ENCODE measurements at regions of chr1 and their contacts with region 1.

Region 1: DNA sequence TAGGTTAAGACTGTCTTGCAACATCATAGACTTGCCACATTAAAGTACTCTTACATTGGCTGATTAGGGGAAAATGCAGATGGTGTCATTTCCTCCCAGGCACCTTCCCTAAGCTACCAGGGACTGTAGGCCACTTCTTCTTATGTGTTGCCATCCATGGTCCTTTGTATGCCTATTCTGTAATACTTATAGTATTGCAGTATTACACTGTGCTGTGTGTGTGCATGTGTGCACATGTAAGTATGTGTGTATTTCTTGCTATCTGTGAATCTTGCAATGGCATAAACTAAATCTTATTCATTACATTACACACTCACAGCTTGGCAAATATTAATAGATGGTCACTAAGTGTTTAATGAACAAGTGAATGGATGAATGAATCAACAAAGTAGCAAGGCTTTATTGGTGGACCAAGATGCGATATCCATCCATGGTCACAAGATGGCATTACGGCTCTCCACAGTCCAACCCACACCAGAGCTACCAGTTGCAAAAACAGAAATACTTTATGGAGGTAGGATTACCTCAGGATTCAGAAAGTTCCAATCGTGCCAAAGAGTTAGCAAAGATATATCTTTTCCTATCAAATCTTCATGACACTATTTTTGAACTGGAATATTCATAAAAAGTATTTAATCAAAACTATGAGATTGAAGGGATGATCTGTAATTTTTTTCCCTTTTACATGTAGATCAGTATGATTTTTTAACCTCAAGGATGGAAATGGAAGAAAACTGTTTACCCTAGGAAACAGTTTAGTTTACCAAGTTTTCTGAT is 160.2 kb downstream of the DENND1B start:
- DNase-seq: peak; percentile 48
- H3K4me3 Mint-ChIP-seq: no peak overlapping the region
- H3K27ac Mint-ChIP-seq: no peak overlapping the region
- H3K4me1 Mint-ChIP-seq: no peaks in the 10 kb centered on the region
- H3K27me3 Mint-ChIP-seq: no peaks in the 10 kb centered on the region
- CTCF ChIP-seq: peak; percentile 46

Region 2: DNA sequence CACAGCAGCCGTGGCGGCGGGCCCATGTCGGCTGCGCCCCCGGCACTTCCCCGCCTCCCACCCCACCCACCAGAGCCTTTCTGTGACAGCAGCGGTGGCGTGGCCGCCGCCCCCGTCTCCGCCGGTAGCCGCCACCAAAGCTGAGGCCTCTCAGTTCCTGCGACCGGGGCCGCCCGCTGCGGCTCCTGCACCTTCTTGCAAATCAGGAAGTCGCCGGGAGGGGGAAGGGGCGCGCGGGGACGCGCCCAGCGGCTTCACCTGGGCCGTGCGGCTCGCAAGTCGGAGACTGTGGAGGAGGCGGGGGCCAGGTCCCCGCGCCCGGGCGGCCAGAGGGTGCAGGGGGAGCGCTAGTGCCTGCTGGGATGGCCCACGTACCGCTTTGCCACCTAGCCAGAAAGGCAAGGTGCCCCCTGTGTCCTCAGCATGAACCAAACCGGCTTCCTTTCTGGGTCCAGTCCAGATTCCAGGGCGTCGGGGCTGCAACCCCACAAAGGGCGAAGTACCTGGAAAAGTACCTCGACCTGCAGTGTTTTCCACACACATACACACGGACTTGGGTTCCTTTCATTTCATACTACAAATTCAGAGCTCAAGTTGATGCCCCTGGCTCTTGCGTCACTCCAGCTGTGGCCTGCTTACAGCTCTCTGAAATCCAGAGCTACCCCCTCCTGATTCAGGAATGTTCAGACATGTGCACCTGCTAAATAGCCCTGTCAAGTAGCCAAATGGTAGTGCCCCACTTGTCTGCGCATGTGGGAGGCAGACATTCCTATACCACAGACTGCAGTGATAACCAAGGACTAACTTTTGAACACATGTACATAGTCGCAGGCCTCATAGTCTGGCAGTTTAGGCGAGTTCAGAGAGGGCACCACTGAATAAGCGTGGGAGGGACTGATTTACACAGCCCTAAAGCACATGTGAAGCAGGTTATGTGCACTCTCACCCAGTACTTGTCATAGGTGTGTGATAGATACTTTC is 160.5 kb after region 1 on chr1 and contains the start of gene DENND1B:
- CTCF ChIA-PET with region 1: no interaction called
- intact Hi-C with region 1: loop called (anchors 5 kb)
- DNase-seq: peak; percentile 93
- H3K4me3 Mint-ChIP-seq: peak within 1 kb of the TSS; percentile 72
- H3K27ac Mint-ChIP-seq: peak within 1 kb of the TSS; percentile 93
- H3K4me1 Mint-ChIP-seq: peaks cover 44% of the 10 kb centered on the region
- H3K27me3 Mint-ChIP-seq: no peaks in the 10 kb centered on the region
- CTCF ChIP-seq: no peak
- total RNA-seq, gene DENND1B: 26.7 and 28.2 TPM in 2 replicates

Region 3: GRCh38 chr1:197868751-197869489 is 253.8 kb after region 1 on chr1:
- CTCF ChIA-PET with region 1: interaction called, 22 read pairs
- intact Hi-C with region 1: loop called (anchors 1 kb)
- DNase-seq: peak; percentile 62
- H3K4me3 Mint-ChIP-seq: no peak overlapping the region
- H3K27ac Mint-ChIP-seq: no peak overlapping the region
- H3K4me1 Mint-ChIP-seq: peaks cover 1% of the 10 kb centered on the region
- H3K27me3 Mint-ChIP-seq: no peaks in the 10 kb centered on the region
- CTCF ChIP-seq: peak; percentile 68

Region 4: DNA sequence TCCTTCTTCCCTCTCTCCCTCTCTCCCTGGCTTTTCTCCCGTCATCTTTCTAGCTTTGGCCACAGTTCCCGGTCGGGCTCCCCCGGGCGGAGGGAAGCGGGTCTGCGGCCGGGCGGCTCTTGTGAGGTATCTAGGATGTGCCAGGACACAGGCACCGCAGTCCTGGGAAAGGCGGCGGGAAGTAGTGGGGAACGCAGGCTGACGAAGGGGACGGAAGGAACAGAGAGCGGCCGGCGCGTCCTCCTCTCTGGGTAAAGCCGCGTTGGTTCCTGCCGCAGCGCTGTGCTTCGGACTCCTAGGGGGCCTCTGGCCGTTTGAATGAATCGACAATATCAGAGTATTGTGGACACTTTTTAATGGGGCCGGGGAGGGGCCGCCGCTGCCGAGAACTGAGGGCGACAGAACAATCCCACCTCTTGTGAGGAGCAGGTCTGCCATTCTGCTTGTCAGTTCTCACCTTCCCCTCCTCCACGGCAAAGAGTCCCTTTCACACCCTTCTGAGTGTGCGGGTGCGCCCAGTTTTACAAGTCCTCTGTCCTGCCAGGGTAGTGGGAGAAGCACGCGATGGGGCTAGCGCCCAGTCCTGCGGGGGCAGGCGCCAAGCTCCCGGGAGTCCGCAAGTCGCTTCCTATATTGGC is 300.9 kb after region 1 on chr1:
- CTCF ChIA-PET with region 1: interaction called, 5 read pairs
- intact Hi-C with region 1: loop called (anchors 2 kb)
- DNase-seq: peak; percentile 88
- H3K4me3 Mint-ChIP-seq: peak overlapping the region; percentile 76
- H3K27ac Mint-ChIP-seq: no peak overlapping the region
- H3K4me1 Mint-ChIP-seq: peaks cover 37% of the 10 kb centered on the region
- H3K27me3 Mint-ChIP-seq: peaks cover 13% of the 10 kb centered on the region
- CTCF ChIP-seq: peak; percentile 72

Region 5: DNA sequence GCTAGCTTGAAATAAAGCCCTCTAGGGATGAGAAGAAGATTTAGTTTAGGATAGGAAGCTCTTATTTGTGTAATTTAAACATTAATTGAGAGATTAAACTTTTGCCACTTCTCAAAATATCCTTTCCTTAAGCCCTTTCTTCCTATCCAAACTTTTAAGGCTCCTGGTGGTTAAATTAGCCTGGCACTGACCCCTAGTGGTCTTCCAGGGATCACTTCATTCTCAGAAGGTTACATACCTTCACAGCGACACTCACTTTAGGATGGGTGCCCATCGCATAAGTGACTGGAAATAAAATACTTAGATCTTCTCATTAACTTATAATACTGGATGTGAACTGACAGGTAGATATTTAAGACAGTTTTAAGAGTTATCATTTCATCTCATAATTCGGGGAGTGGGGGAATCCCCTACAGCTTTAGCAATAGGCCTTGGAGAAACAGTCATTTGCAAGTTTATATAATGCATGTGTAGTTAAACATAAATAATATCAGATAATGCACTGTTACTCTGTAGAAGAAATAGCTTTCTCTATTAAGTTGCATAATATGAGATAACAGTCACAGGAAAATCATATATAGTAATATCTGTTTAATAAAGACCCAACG is 309.5 kb after region 1 on chr1:
- CTCF ChIA-PET with region 1: no interaction called
- intact Hi-C with region 1: loop called (anchors 2 kb)
- DNase-seq: peak; percentile 60
- H3K4me3 Mint-ChIP-seq: no peak overlapping the region
- H3K27ac Mint-ChIP-seq: no peak overlapping the region
- H3K4me1 Mint-ChIP-seq: peaks cover 49% of the 10 kb centered on the region
- H3K27me3 Mint-ChIP-seq: no peaks in the 10 kb centered on the region
- CTCF ChIP-seq: peak; percentile 51